ENCODE measurements at regions of chr7 and their contacts with region 1.

Region 1: GRCh38 chr7:106659963-106660861 is 746 bp downstream of the CCDC71L start:
- DNase-seq: peak; percentile 55
- ATAC-seq: peak; percentile 89
- H3K4me3 ChIP-seq: peak overlapping the region; percentile 74 to 77
- H3K27ac ChIP-seq: peak overlapping the region; percentile 46; the same call in 1 of the 2 replicates
- H3K4me1 ChIP-seq: peaks cover 5% of the 10 kb centered on the region; the same call in 1 of the 2 replicates
- H3K27me3 ChIP-seq: peaks cover 5% of the 10 kb centered on the region
- CTCF ChIP-seq: peak; percentile 99

Region 2: DNA sequence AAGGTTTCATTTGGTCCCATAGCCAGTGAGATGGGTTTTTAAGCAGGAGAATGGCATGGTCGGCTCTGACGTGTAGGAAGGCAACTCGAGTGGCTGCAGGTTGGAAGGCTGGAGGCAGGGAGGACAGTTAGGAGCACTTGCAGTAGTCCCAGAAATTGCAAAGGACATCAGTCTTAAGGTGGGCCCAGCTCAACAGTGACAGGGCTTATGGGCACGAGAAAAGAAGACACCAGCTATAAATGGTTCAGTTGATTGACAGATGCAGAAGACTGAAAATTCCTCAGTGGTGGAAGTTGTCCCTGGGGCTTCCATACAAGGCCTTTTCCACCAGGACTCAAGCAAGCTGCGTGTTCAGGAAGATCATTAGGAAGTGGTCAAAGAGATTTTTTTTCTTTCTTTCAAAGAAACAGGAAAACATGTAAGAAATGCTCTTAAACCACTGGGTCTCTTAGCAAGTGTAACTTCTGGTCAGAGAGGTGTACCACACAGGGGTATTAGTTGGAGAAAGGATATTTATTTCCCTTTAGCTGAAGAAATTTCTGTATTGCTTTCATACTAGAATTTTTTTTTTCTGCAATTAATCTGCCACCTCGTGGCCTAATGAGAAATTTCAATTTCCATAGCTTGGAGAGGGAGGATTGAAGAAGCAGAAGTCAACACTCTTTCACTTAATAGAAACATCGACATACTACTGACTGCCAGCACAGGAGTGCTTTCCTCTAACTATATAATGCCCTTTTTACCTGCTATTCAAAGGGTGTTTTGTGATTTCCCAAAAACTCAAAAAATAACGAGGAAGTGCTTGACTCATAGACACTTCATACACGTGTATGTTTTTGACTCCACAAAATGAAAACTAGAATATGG is 198.0 kb before region 1 on chr7:
- CTCF ChIA-PET with region 1: no interaction called
- POLR2A ChIA-PET with region 1: interaction called, 12 read pairs
- in situ Hi-C with region 1: no loop called
- intact Hi-C with region 1: no loop called
- DNase-seq: peak; percentile 58
- ATAC-seq: peak; percentile 72
- H3K4me3 ChIP-seq: no peak overlapping the region
- H3K27ac ChIP-seq: no peak overlapping the region
- H3K4me1 ChIP-seq: no peaks in the 10 kb centered on the region
- H3K27me3 ChIP-seq: no peaks in the 10 kb centered on the region
- CTCF ChIP-seq: peak; percentile 62; the same call in 1 of the 2 replicates

Region 3: DNA sequence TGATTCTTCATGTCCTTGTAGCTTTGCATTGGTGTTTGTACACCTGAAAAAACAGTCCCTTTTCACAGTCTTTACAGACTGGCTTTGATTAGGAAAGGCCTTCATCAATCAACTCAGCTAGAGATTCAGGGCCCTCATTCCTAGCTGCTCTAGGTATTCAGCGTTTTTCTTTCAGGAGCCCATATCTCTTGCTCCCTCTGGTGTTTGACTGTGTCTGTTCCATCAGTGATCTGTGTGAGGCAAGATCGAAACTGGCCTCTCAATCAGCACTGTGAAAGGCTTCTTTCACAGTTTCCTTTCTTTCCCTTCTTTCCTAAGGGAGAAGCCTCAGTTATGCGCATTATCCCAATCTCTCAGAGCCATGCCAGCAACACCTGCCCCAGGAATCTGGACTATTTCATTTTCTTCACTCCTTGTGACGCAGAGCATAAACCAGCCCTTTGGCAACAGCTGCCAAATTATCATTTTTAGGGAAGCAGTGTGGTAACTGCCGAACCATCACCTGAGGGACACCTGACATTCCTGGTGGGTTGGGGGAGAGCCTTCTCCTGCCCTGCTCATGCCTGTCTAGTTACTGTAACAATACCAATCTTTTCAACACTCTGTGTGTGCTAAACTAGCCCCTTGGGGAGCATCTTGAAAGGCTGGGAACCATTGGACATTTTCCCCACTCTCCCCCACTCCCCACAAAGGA is 76.4 kb after region 1 on chr7:
- CTCF ChIA-PET with region 1: interaction called, 4 read pairs
- POLR2A ChIA-PET with region 1: no interaction called
- in situ Hi-C with region 1: no loop called
- intact Hi-C with region 1: loop called (anchors 2 kb)
- DNase-seq: peak; percentile 57
- ATAC-seq: peak; percentile 88
- H3K4me3 ChIP-seq: no peak overlapping the region
- H3K27ac ChIP-seq: no peak overlapping the region
- H3K4me1 ChIP-seq: no peaks in the 10 kb centered on the region
- H3K27me3 ChIP-seq: no peaks in the 10 kb centered on the region
- CTCF ChIP-seq: peak; percentile 72

Measured in Panc1 (cell line).